ENCODE measurements at regions of chr2 and their contacts with region 1.

Region 1: GRCh38 chr2:236352761-236353593 is 88.8 kb upstream of the ASB18 start:
- DNase-seq: no peak

Region 2: DNA sequence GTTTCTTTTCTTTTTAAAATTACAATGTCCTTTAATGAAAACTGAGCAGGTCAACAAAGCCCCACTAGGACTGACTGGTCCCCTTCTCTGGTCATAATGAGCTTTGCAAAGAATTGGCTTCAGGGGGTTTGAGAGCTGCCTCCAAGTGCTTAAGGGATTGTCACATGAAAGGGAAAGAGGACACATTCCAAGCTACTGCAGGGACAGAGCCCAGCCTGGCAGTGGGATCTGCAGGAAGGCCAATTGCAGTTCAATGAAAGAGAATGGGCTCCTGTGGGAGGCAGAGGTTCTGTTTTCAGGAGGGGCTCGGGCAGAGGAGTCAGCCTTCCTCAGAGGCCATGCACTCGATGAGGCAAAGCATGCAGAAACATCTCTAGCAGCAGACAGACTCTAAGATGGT is 132.5 kb after region 1 on chr2:
- intact Hi-C with region 1: no loop called
- DNase-seq: no peak

Region 3: DNA sequence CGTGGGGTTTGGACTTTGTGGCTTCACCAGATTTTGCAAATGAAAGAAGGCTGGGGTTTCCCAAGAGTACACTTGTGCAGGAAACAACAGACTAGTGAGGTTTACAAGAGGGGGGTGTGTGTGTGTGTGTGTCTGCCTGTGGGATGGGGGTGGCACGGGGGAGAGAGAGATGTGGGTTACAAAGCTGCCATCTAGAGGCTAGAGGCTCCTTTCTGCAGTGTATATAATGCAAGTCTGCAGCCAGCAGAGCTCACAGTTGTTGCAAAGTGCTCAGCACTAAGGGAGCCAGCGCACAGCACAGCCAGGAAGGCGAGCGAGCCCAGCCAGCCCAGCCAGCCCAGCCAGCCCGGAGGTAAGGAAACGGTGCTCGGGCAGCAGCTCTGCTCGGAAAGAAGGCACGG is 216.6 kb after region 1 on chr2 and contains the start of gene ACKR3:
- intact Hi-C with region 1: loop called (anchors 2 kb)
- DNase-seq: peak; percentile 53 to 95 (median 74)

Region 4: GRCh38 chr2:237060534-237061312 is 707.7 kb after region 1 on chr2:
- intact Hi-C with region 1: loop called (anchors 2 kb)
- DNase-seq: peak in 7 of 10 donors; percentile 24 to 84 (median 48)